ENCODE measurements at regions of chr7 and their contacts with region 1.

Region 1: DNA sequence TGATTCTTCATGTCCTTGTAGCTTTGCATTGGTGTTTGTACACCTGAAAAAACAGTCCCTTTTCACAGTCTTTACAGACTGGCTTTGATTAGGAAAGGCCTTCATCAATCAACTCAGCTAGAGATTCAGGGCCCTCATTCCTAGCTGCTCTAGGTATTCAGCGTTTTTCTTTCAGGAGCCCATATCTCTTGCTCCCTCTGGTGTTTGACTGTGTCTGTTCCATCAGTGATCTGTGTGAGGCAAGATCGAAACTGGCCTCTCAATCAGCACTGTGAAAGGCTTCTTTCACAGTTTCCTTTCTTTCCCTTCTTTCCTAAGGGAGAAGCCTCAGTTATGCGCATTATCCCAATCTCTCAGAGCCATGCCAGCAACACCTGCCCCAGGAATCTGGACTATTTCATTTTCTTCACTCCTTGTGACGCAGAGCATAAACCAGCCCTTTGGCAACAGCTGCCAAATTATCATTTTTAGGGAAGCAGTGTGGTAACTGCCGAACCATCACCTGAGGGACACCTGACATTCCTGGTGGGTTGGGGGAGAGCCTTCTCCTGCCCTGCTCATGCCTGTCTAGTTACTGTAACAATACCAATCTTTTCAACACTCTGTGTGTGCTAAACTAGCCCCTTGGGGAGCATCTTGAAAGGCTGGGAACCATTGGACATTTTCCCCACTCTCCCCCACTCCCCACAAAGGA is 75.7 kb upstream of the CCDC71L start:
- DNase-seq: peak; percentile 86
- H3K4me3 Mint-ChIP-seq: peak overlapping the region; percentile 8
- H3K27ac Mint-ChIP-seq: peak overlapping the region; percentile 12
- H3K4me1 Mint-ChIP-seq: peaks cover 32% of the 10 kb centered on the region
- H3K27me3 Mint-ChIP-seq: no peaks in the 10 kb centered on the region

Region 2: GRCh38 chr7:106176414-106177299 is 560.0 kb before region 1 on chr7:
- intact Hi-C with region 1: loop called (anchors 1 kb)
- DNase-seq: peak; percentile 91
- H3K4me3 Mint-ChIP-seq: no peak overlapping the region
- H3K27ac Mint-ChIP-seq: no peak overlapping the region
- H3K4me1 Mint-ChIP-seq: peaks cover 4% of the 10 kb centered on the region
- H3K27me3 Mint-ChIP-seq: peaks cover 22% of the 10 kb centered on the region

Region 3: GRCh38 chr7:106485031-106485551 is 251.6 kb before region 1 on chr7:
- intact Hi-C with region 1: loop called (anchors 5 kb)
- DNase-seq: peak; percentile 55
- H3K4me3 Mint-ChIP-seq: peak overlapping the region; percentile 11
- H3K27ac Mint-ChIP-seq: peak overlapping the region; percentile 82
- H3K4me1 Mint-ChIP-seq: peaks cover 43% of the 10 kb centered on the region
- H3K27me3 Mint-ChIP-seq: no peaks in the 10 kb centered on the region

Region 4: DNA sequence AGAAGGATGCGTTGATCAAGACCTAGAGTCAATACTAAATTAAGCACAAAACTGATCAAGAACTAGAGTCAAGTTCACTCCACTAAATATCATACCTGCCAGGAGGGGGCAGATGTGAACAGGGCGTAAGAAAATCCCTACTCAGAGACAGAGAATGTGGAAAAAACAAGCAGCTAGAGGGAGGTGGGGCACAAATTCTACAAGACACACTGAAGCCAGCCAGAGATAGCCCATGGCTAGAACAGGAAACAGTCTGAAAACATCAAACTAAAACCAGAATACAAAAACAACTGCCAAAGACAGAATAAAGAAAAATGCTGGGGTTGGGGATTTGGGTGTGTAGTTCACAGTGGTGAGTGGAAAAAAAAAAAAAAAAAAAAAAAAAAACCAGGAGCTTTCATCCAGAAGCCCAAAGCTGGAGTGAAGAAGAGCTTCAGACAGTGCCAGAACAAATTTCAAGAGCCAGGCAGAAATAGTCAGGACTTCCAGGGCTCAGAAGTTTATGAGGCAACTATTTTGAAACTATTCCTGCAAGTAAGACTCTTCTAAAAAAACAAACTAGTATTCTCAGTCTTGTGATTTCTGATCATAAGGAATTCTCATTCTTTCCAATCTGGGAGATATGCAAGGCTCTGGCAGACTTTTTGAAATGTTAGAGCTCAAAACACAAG is 194.0 kb before region 1 on chr7:
- intact Hi-C with region 1: loop called (anchors 1 kb)
- DNase-seq: peak; percentile 75
- H3K4me3 Mint-ChIP-seq: no peak overlapping the region
- H3K27ac Mint-ChIP-seq: peak overlapping the region; percentile 4
- H3K4me1 Mint-ChIP-seq: peaks cover 8% of the 10 kb centered on the region
- H3K27me3 Mint-ChIP-seq: no peaks in the 10 kb centered on the region

Region 5: GRCh38 chr7:106659963-106660861 is 76.4 kb before region 1 on chr7:
- intact Hi-C with region 1: loop called (anchors 1 kb)
- DNase-seq: peak; percentile 94
- H3K4me3 Mint-ChIP-seq: peak overlapping the region; percentile 88
- H3K27ac Mint-ChIP-seq: peak overlapping the region; percentile 94
- H3K4me1 Mint-ChIP-seq: peaks cover 27% of the 10 kb centered on the region
- H3K27me3 Mint-ChIP-seq: no peaks in the 10 kb centered on the region

Region 6: GRCh38 chr7:106717955-106718871 is 18.4 kb before region 1 on chr7:
- intact Hi-C with region 1: loop called (anchors 1 kb)
- DNase-seq: peak; percentile 85
- H3K4me3 Mint-ChIP-seq: no peak overlapping the region
- H3K27ac Mint-ChIP-seq: no peak overlapping the region
- H3K4me1 Mint-ChIP-seq: peaks cover 22% of the 10 kb centered on the region
- H3K27me3 Mint-ChIP-seq: no peaks in the 10 kb centered on the region

Region 7: DNA sequence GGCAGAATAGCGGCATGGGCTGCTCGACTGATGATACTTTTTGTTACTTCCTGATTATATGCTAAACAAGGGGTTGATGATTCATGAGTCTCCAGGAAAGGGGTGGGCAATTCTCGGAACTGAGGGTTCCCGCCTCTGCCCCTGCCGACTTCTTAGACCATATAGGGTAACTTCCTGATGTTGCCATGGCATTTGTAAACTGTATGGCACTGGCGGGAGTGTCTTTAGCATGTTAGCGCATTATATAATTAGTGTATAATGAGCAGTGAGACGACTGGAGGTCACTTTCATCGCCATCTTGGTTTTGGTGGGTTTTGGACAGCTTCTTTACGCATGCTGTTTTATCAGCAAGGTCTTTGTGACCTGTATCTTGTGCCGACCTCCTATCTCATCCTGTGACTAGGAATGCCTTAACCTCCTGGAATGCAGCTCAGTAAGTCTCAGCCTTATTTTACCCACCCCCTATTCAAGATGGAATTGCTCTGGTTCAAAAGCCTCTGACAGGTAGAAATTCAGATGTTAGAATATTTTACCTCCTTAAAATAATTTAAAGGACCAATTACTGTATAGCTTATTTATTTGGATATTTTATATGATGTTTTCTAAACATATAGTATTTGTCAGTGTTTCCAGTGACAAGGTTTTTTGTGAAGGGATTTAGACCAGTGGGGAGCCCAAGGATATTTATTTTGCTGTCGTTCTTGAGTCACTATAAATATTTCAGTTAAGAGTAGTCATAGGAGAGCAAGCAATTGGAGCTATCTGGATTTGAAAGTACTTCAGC is 38.3 kb after region 1 on chr7:
- intact Hi-C with region 1: loop called (anchors 5 kb)
- DNase-seq: no peak
- H3K4me3 Mint-ChIP-seq: no peak overlapping the region
- H3K27ac Mint-ChIP-seq: peak overlapping the region; percentile 45
- H3K4me1 Mint-ChIP-seq: peaks cover 28% of the 10 kb centered on the region
- H3K27me3 Mint-ChIP-seq: no peaks in the 10 kb centered on the region

Region 8: DNA sequence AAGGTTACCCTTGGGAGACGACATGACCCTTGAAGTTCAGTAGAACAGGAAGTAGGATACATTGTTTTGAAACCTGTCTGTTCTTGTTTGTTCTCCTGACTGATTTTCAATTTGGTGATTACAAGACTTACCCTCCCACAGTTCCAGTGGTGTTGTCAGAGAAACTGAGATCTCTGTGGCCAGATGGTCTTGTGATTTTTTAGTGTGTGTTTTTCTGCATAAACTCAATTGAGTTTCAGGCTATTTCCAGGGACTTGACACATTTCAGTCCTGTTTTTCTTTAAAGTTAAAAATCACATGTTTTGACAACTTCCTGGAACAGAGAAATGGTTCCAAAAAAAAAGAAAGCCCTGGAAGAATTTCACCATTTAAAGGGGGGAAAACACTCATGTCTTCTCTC is 150.8 kb after region 1 on chr7:
- intact Hi-C with region 1: no loop called
- DNase-seq: no peak
- H3K4me3 Mint-ChIP-seq: no peak overlapping the region
- H3K27ac Mint-ChIP-seq: peak overlapping the region; percentile 77
- H3K4me1 Mint-ChIP-seq: peaks cover 18% of the 10 kb centered on the region
- H3K27me3 Mint-ChIP-seq: no peaks in the 10 kb centered on the region

Measured in activated CD4-positive, alpha-beta T cell treated with anti-CD3 and anti-CD28 coated beads, Interleukin-2, amount 10 ng/mL, durations not matched to agents 24 days and 14 days (primary cell).